ENCODE measurements at regions of chr11 and their contacts with region 1.

Region 1: DNA sequence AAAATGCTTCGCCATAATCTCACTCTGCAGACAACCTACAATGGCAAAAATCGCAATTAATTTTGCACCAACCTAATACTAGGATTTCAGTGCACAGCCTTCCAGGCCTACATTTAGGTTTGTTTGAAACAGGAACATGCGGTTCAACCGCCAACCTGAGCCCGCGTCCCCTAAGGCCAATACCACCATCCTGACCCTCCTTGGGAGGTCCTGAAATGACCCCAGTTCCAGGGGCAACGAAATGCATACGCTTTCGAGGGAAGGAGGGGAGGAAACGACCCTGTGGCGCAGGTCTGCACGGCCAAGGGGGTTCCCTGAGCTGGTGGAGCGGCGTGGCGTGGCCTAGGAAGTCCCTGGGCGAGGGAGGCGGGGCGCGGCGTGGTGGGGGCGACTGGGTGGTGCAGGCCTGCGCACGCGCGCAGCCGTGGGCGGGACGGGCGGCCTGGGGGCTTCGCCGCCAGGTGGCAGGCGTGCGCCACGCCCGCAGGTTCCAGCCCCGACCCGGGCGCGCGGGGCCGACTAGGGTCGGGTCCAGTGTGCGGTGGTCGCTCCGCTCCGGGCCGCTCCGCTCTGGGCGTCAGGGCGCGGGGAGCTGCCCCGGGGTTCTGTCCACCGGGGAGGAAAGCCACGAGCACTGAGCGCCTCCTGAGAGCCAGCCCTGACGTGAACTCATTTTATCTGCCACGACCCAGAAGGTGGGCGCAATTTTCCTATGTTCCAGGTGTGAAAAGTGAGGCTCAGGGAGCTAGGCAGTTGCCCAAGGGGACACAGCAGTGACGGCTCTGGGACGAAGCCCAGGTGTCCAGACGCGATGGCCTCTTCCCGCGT is 94.1 kb downstream of the SWAP70 start:
- DNase-seq: peak; percentile 99
- H3K4me3 ChIP-seq: peak overlapping the region; percentile 55 to 64
- H3K27ac ChIP-seq: peak overlapping the region; percentile 91 to 97
- H3K4me1 ChIP-seq: peaks cover 29 to 31% of the 10 kb centered on the region in 2 experiments
- H3K27me3 ChIP-seq: no peaks in the 10 kb centered on the region
- CTCF ChIP-seq: peak; percentile 67
- EP300 ChIP-seq: peak in 1 of 2 experiments; percentile 20; a peak in 1 of 4 replicates
- RAD21 ChIP-seq: peak; percentile 78

Region 2: GRCh38 chr11:9534791-9535781 is 222.9 kb before region 1 on chr11:
- CTCF ChIA-PET with region 1: no interaction called
- POLR2A ChIA-PET with region 1: no interaction called
- DNase-seq: peak; percentile 53
- H3K4me3 ChIP-seq: no peak overlapping the region; a peak in 1 of 4 replicates
- H3K27ac ChIP-seq: no peak overlapping the region
- H3K4me1 ChIP-seq: no peaks in the 10 kb centered on the region
- H3K27me3 ChIP-seq: no peaks in the 10 kb centered on the region
- CTCF ChIP-seq: peak; percentile 80
- EP300 ChIP-seq: no peak
- RAD21 ChIP-seq: peak; percentile 46

Region 3: DNA sequence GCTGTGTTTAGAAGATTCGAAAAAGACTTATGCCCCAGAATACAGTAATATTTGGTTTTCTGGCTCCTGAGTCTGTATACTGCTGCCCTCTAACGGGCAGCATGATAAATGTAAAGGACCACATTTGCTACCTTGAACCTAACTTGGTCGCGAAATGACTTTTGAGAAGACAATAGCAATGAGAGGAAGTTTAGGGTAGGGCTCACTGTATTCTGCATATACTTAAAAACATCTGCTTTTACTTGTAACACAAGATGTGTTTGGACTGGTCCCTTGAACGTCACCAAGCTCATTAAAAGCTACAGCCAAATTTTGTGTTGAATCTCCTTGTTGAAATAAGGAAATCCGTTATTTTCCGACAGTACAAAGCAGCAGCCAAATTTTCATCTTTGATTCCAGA is 215.0 kb after region 1 on chr11:
- CTCF ChIA-PET with region 1: interaction called, 39 read pairs
- POLR2A ChIA-PET with region 1: no interaction called
- DNase-seq: peak; percentile 67
- H3K4me3 ChIP-seq: no peak overlapping the region
- H3K27ac ChIP-seq: no peak overlapping the region; a peak in 1 of 4 replicates
- H3K4me1 ChIP-seq: peaks cover 2 to 4% of the 10 kb centered on the region in 2 experiments; a peak in 2 of 4 replicates
- H3K27me3 ChIP-seq: no peaks in the 10 kb centered on the region
- CTCF ChIP-seq: peak; percentile 88
- EP300 ChIP-seq: no peak
- RAD21 ChIP-seq: peak; percentile 84

Region 4: DNA sequence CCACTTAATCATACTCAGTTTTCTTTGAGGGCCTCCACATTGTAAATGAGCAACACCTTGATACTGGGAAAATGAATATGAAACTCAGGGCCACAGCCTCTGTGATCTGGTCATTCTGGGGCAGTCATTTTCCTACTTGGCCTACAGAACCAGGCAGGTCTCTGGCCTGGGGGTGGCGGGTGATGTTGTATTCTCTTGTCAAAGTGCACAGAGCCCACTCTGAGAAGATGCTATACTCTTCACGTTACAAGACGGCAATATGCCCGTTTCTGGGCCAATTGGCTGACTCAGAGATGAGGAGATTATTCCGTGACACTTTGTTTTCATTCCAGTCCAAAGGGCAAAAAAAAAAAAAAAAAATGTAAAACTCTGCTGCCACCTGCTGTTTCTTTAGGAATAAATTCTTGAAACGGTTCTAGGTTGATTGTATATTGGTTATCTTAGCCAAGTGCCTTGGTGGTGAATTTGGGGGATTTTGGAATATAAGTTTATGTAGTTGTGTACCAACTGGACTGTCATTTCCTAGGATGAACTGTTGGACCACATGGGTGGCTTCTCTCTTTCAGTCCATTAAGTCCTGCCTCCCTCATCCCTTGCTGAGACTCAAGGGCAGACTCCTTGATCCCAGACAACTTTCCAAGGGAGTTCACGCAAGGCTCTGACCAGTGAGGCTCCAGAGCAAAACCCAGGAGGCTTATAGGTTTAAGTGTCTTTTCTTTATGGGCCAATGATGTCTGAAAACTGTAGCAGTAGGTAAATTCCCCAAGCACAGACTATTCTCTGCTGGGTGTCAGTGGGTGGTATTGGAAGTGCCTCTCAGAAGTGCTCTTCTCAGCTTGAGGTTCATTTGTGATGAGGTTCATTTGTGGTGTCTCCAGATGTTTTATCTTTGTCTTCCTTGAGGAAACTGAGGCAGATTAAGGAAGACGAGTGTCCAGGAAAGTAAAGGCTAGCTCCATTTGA is 565.1 kb after region 1 on chr11:
- CTCF ChIA-PET with region 1: interaction called, 22 read pairs
- POLR2A ChIA-PET with region 1: no interaction called
- DNase-seq: peak; percentile 39
- H3K4me3 ChIP-seq: no peak overlapping the region; a peak in 1 of 4 replicates
- H3K27ac ChIP-seq: peak overlapping the region; percentile 58 to 97
- H3K4me1 ChIP-seq: peaks cover 36% of the 10 kb centered on the region in 2 experiments
- H3K27me3 ChIP-seq: no peaks in the 10 kb centered on the region
- CTCF ChIP-seq: peak; percentile 71
- EP300 ChIP-seq: peak; percentile 9 to 69; a peak in 1 of 4 replicates
- RAD21 ChIP-seq: peak; percentile 82

Region 5: DNA sequence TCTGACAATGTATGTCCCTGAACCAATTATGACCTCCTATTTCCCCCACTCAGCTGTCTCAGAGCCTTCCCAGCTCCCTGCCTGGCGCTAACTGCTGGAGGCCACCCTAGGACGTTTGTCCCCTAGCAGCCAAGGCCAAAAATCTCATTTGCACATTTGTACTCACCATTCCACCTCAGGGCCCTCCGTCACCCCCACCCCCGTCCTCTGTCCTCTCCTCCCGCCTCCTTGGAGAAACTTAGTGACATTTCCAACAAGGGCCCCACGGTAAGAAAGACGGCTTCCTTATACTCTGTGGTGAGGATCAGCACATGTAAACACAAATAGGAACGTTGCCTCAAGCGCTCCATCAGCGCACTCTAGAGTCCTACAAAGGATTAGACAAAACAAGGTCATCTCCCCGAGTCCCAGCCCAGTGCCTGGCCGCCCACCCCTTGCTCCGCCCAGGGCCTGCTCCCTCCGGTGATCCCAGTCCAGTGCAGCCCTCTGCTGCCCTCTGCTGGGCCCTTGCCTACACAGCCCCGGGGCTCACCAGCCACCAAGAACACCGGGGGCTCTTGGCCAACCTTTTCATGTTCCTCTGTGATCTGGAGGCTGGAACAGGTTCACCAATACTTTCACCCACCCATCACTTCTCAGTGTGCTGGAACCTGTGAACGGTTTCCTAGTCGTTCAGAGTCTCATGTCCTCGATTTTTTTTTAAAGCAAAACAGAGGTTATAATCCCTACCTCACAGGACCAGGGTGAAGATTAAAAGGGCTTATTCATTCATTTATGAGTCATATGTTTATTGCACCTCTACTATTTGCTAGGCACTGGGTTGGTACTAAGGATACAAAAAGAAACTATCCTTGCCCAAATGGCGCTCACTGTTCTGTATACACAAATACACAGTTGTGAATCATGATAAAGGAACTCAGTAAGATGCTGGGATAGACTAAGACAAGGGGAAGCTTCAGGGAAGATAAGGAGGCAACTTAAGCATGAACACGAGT is 977.8 kb after region 1 on chr11:
- CTCF ChIA-PET with region 1: interaction called, 14 read pairs
- POLR2A ChIA-PET with region 1: no interaction called
- DNase-seq: peak; percentile 93
- H3K4me3 ChIP-seq: peak overlapping the region; percentile 10 to 54; a peak in 2 of 4 replicates
- H3K27ac ChIP-seq: peak overlapping the region; percentile 62 to 68; a peak in 3 of 4 replicates
- H3K4me1 ChIP-seq: peaks cover 9 to 11% of the 10 kb centered on the region in 2 experiments; a peak in 2 of 4 replicates
- H3K27me3 ChIP-seq: no peaks in the 10 kb centered on the region
- CTCF ChIP-seq: peak; percentile 98
- EP300 ChIP-seq: peak in 1 of 2 experiments; percentile 8; a peak in 1 of 4 replicates
- RAD21 ChIP-seq: peak; percentile 98